H1 (cell line): ENCODE measurements at regions of chr6 and their contacts with region 1.

Region 1: DNA sequence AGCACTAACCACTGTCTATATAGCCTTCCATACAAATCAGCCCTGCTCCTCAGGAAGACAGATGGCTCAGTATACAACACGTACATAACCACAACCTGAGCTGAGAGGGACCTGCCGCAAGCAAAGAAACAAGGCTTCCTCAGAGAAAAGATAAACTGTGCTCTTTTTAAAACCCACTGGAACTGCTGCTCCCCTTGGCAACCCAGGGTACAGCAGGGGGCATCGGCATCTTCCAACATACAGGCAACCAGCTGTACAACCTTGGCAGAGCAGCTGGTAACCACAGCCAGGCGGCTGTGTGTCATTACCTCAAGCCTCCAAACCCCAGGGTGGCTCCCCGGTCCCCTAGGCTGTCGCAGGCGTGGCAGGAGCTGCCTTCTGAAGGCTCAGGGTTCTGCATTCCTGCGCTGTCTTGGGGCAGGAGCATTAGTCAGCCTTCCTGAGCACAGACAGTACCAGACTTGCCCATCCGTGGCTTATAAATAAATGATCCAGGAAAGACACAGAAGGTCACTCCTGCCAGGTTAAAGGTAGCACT is 249.5 kb downstream of the ADGRG6 start:
- DNase-seq: no peak
- H3K4me3 ChIP-seq: no peak overlapping the region
- H3K27ac ChIP-seq: no peak overlapping the region
- H3K4me1 ChIP-seq: peaks cover 0 to 6% (median 4%) of the 10 kb centered on the region in 4 experiments; a peak in 5 of 7 replicates
- H3K27me3 ChIP-seq: no peaks in the 10 kb centered on the region
- CTCF ChIP-seq: no peak
- EP300 ChIP-seq: no peak
- POLR2A ChIP-seq: no peak
- RAD21 ChIP-seq: no peak

Region 2: GRCh38 chr6:142387997-142388815 is 163.1 kb before region 1 on chr6:
- CTCF ChIA-PET with region 1: no interaction called
- POLR2A ChIA-PET with region 1: no interaction called
- DNase-seq: no peak
- H3K4me3 ChIP-seq: no peak overlapping the region
- H3K27ac ChIP-seq: no peak overlapping the region
- H3K4me1 ChIP-seq: no peaks in the 10 kb centered on the region
- H3K27me3 ChIP-seq: no peaks in the 10 kb centered on the region
- CTCF ChIP-seq: peak in 2 of 3 experiments; percentile 32 to 59; a peak in 2 of 4 replicates
- EP300 ChIP-seq: no peak
- POLR2A ChIP-seq: no peak
- RAD21 ChIP-seq: peak; percentile 62 to 66

Region 3: GRCh38 chr6:142444881-142445301 is 106.5 kb before region 1 on chr6:
- CTCF ChIA-PET with region 1: no interaction called
- POLR2A ChIA-PET with region 1: no interaction called
- DNase-seq: no peak
- H3K4me3 ChIP-seq: no peak overlapping the region
- H3K27ac ChIP-seq: no peak overlapping the region
- H3K4me1 ChIP-seq: peaks cover 0 to 15% (median 3%) of the 10 kb centered on the region in 4 experiments; a peak in 5 of 7 replicates
- H3K27me3 ChIP-seq: no peaks in the 10 kb centered on the region
- CTCF ChIP-seq: no peak
- EP300 ChIP-seq: no peak
- POLR2A ChIP-seq: no peak
- RAD21 ChIP-seq: no peak

Region 4: GRCh38 chr6:142537612-142538478 is 13.5 kb before region 1 on chr6:
- CTCF ChIA-PET with region 1: interaction called, 13 read pairs
- POLR2A ChIA-PET with region 1: no interaction called
- DNase-seq: peak; percentile 9 to 79
- H3K4me3 ChIP-seq: no peak overlapping the region
- H3K27ac ChIP-seq: no peak overlapping the region
- H3K4me1 ChIP-seq: no peaks in the 10 kb centered on the region
- H3K27me3 ChIP-seq: no peaks in the 10 kb centered on the region
- CTCF ChIP-seq: peak; percentile 53 to 80 (median 67)
- EP300 ChIP-seq: no peak
- POLR2A ChIP-seq: no peak
- RAD21 ChIP-seq: peak; percentile 81 to 84

Region 5: GRCh38 chr6:142566628-142567396 is 15.5 kb after region 1 on chr6:
- CTCF ChIA-PET with region 1: interaction called, 24 read pairs
- POLR2A ChIA-PET with region 1: no interaction called
- DNase-seq: peak; percentile 39 to 92
- H3K4me3 ChIP-seq: no peak overlapping the region
- H3K27ac ChIP-seq: no peak overlapping the region
- H3K4me1 ChIP-seq: peaks cover 0 to 5% (median 2%) of the 10 kb centered on the region in 4 experiments; a peak in 5 of 7 replicates
- H3K27me3 ChIP-seq: no peaks in the 10 kb centered on the region
- CTCF ChIP-seq: peak; percentile 74 to 86 (median 75)
- EP300 ChIP-seq: no peak
- POLR2A ChIP-seq: no peak
- RAD21 ChIP-seq: peak; percentile 82 to 85

Region 6: GRCh38 chr6:142613981-142614380 is 62.6 kb after region 1 on chr6:
- CTCF ChIA-PET with region 1: no interaction called
- POLR2A ChIA-PET with region 1: no interaction called
- DNase-seq: no peak
- H3K4me3 ChIP-seq: no peak overlapping the region
- H3K27ac ChIP-seq: no peak overlapping the region
- H3K4me1 ChIP-seq: no peaks in the 10 kb centered on the region
- H3K27me3 ChIP-seq: no peaks in the 10 kb centered on the region
- CTCF ChIP-seq: no peak
- EP300 ChIP-seq: no peak
- POLR2A ChIP-seq: no peak
- RAD21 ChIP-seq: no peak; a peak in 1 of 4 replicates